Cardiac septum (tissue), 1 donor: ENCODE measurements at regions of chr17 and their contacts with region 1.

Region 1: DNA sequence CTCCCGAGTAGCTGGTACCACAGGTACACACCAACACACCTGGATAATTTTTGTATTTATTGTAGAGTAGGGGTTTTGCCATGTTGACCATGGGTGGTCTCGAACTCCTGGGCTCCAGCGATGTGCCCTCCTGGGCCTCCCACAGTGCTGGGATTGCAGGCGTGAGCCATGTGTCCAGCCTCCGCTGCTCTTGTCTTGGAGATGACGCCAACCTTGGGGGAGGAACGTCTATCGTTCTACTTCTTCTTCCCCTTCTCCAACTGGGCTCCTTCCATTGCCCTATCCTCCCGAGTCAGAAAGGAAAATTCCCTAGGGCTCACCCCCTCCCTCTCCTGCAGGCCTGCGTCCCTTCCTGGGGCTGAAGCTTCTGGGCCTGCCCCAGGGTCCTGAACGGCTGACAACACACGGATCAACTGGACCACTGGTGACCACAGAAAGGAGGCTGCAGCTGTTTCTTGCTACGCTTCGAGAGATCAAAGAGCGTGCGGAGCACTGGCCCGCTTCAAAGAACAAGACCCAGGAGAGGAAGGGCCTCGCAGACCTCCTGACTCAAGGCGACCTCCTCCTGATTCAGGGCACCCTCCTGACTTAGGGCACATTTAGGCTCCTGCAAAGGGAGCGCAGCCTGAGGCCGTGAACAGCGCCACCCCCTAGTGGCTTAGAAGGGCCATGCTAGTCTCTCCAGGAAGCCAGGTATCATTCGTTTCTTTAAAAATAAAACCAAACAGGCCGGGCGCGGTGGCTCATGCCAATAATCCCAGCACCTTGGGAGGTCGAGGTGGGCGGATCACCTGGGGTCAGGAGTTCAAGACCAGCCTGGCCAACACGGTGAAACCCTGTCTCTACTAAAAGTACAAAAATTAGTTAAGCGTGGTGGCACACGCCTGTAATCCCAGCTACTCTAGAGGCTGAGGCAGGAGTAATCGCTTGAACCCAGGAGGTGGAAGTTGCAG is 48.5 kb upstream of the HELZ start:
- DNase-seq: peak; percentile 85

Region 2: DNA sequence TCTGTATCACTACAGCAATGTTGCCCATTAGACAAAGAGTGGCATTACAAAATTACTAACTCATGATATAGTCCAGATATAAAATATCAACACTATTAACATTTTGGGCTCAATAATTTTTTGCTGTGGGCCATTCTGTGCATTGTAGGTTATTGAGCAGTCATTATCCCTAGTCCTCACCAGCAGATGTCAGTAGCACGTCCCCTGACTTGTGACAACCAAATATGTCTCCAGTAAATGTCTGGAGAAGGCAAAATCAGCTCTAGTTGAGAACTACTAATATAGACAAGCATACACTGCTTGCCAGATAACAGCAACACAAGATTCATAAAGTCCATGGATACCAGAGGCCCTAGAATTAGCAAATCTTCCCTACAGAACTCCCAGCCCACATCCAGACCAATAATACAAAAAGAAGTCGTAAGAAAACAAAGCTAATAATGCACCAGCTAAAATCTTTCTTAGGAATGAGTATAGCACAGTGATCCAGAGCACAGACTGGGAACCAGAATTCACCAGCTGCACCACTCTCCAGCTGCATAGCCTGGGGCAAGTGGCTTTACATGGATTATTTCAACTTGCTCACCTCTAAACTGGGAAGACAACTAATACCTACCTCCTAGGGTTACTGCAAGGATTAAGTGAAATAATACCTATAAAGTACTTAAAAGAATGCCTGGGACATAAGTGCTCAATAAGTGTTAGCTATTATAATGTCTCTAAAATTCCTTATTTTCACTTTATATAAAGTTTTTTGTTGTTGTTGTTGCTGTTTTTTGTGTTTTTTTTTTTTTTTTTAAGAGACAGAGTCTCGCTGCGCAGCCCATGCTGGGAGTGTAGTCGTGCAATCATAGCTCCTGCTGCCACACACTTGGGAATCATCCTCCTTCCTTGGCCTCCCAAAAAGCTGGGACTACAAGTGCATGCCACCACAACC is 72.2 kb before region 1 on chr17:
- intact Hi-C with region 1: loop called (anchors 5 kb)
- DNase-seq: no peak

Region 3: GRCh38 chr17:67615011-67615561 is 321.6 kb after region 1 on chr17:
- intact Hi-C with region 1: no loop called
- DNase-seq: peak; percentile 67